ENCODE measurements at regions of chr6 and their contacts with region 1.

Region 1: GRCh38 chr6:6724539-6725467 is 136.3 kb downstream of the LY86 start:
- DNase-seq: peak; percentile 76
- H3K4me3 Mint-ChIP-seq: peak overlapping the region; percentile 25
- H3K27ac Mint-ChIP-seq: peak overlapping the region; percentile 4
- H3K4me1 Mint-ChIP-seq: peaks cover 22% of the 10 kb centered on the region
- H3K27me3 Mint-ChIP-seq: peaks cover 62% of the 10 kb centered on the region

Region 2: DNA sequence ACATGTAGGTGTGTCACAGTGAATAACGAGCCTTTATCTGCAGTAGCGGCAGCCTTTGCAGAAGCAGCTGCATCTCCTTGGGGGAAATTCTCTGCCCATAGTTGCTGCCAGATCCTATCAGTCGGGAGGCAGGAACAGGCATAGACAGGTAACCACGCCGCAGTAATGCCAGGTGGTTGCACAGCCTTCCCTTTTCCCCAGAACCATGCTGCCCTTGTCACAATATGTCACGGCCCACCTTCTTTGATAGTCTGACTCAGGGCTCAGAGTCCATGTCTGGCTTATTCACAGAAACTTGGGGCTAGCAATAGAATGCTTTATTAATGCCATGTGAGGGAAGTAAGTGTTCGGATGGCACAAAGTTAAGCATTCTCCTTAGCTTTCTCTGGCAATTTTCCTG is 481.0 kb before region 1 on chr6:
- CTCF ChIA-PET with region 1: no interaction called
- DNase-seq: no peak
- H3K4me3 Mint-ChIP-seq: no peak overlapping the region
- H3K27ac Mint-ChIP-seq: no peak overlapping the region
- H3K4me1 Mint-ChIP-seq: no peaks in the 10 kb centered on the region
- H3K27me3 Mint-ChIP-seq: peaks cover 10% of the 10 kb centered on the region

Region 3: GRCh38 chr6:6676910-6677441 is 47.8 kb before region 1 on chr6:
- CTCF ChIA-PET with region 1: interaction called, 11 read pairs
- DNase-seq: peak; percentile 91
- H3K4me3 Mint-ChIP-seq: no peak overlapping the region
- H3K27ac Mint-ChIP-seq: peak overlapping the region; percentile 84
- H3K4me1 Mint-ChIP-seq: peaks cover 57% of the 10 kb centered on the region
- H3K27me3 Mint-ChIP-seq: peaks cover 14% of the 10 kb centered on the region

Region 4: GRCh38 chr6:6696867-6697531 is 27.8 kb before region 1 on chr6:
- CTCF ChIA-PET with region 1: interaction called, 49 read pairs
- DNase-seq: peak; percentile 61
- H3K4me3 Mint-ChIP-seq: no peak overlapping the region
- H3K27ac Mint-ChIP-seq: no peak overlapping the region
- H3K4me1 Mint-ChIP-seq: peaks cover 49% of the 10 kb centered on the region
- H3K27me3 Mint-ChIP-seq: peaks cover 53% of the 10 kb centered on the region

Region 5: GRCh38 chr6:7238900-7239589 is 514.2 kb after region 1 on chr6:
- CTCF ChIA-PET with region 1: interaction called, 16 read pairs
- DNase-seq: peak; percentile 84
- H3K4me3 Mint-ChIP-seq: no peak overlapping the region
- H3K27ac Mint-ChIP-seq: peak overlapping the region; percentile 33
- H3K4me1 Mint-ChIP-seq: peaks cover 18% of the 10 kb centered on the region
- H3K27me3 Mint-ChIP-seq: no peaks in the 10 kb centered on the region

Measured in activated naive CD4-positive, alpha-beta T cell treated with anti-CD3 and anti-CD28 coated beads, Interleukin-2, amount 10 ng/mL, durations not matched to agents 7 days and 5 days (primary cell).